ENCODE measurements at regions of chr12 and their contacts with region 1.

Region 1: DNA sequence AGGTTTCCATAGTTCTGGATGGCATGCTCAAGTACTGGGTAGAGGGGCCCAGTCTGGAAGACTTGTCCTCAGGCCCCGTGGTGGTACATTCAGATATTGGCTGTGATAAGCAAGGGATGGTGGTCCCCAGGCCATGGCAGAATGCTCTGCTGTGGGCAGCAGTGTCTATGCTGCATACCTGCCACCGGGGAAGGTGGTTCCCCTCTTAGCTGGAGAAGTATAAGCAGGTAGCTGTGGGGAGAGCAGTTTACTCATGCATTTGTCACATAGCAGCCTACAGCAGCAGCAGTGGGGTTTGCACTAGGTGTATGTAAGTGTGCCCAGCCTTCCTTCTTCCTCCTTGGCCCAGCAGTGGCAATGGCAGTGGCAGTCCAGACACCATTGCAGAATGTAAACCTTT is 69.3 kb upstream of the ADAMTS20 start:
- DNase-seq: no peak

Region 2: GRCh38 chr12:43551971-43552559 is 69.2 kb before region 1 on chr12 and contains the start of gene ADAMTS20:
- intact Hi-C with region 1: no loop called
- DNase-seq: no peak
- total RNA-seq, gene ADAMTS20: not detected

Region 3: GRCh38 chr12:44565163-44565562 is 943.9 kb after region 1 on chr12:
- intact Hi-C with region 1: loop called in 1 of 2 experiments (anchors 5 kb)
- DNase-seq: no peak

Measured in posterior vena cava (tissue), 2 donors.